Activated T-helper 1 cell treated with anti-CD3 and anti-CD28 coated beads, Interleukin-12 subunit alpha, Interleukin-12 subunit beta, Interleukin-2, Interleukin-4 antibody, amounts not matched to agents 30 ng/mL and 10 ng/mL and 1 ng/mL, durations not matched to agents 14 hours and 24 hours and 36 hours (primary cell): ENCODE measurements at regions of chr9 and their contacts with region 1.

Region 1: GRCh38 chr9:128847803-128848202 is 18.2 kb upstream of the SPOUT1 start:
- DNase-seq: no peak
- H3K4me3 Mint-ChIP-seq: no peak overlapping the region
- H3K27ac Mint-ChIP-seq: no peak overlapping the region
- H3K4me1 Mint-ChIP-seq: no peaks in the 10 kb centered on the region
- H3K27me3 Mint-ChIP-seq: no peaks in the 10 kb centered on the region

Region 2: DNA sequence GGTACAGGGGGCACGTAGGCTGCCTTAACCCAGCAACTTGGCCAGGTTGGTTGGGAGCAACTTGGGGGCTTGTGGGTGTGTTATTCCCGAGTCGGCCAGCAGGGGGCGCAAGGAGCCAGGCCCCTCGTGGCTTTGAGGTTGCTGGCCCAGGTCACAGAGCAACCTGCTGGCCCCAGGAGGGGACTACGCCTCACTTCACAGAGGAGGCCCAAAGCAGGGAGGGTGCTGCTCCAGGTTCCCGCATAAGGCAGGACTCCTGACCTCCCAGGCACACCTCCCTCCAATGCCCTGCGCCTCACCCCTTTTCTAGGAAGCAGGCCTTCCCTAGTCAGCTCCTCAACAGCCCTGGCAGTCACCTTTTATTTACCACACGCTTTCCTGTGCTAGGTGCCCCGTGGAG is 15.8 kb after region 1 on chr9:
- intact Hi-C with region 1: loop called (anchors 1 kb)
- DNase-seq: peak; percentile 77
- H3K4me3 Mint-ChIP-seq: no peak overlapping the region
- H3K27ac Mint-ChIP-seq: no peak overlapping the region
- H3K4me1 Mint-ChIP-seq: peaks cover 6% of the 10 kb centered on the region
- H3K27me3 Mint-ChIP-seq: no peaks in the 10 kb centered on the region